Left cardiac atrium (tissue), 4 donors: ENCODE measurements at regions of chr7 and their contacts with region 1.

Region 1: DNA sequence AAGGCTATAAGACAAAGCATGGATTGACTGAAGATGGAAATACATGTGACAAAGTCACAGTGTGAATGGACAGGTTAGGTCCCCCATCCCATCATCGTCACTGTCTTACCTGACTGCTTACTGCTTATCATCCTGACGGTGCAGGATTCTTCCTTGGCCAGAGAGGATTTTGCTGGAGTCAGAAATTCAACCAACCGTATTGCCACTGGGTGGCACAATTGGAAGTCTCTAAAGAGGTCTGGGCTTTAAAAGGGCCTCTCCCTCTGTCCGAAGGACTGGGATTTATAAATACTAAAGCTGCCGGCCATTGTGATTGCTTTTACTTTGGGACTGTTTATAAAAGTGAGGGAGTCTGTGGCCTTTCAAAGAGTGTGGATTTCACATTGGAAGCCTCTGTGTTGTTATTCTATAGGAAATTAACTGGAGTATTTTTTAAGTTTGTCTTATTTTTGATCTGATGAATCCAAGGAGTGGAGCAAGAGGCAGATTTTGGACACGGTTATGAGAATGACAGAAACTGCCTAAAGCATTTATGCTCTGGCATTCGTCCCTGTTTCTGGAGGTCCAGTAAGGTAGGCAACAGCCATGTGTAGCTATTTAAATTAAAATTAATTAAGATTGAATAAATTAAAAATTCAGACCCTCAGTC is 113.3 kb upstream of the CREB5 start:
- DNase-seq: no peak
- ATAC-seq: peak; percentile 65 to 84

Region 2: DNA sequence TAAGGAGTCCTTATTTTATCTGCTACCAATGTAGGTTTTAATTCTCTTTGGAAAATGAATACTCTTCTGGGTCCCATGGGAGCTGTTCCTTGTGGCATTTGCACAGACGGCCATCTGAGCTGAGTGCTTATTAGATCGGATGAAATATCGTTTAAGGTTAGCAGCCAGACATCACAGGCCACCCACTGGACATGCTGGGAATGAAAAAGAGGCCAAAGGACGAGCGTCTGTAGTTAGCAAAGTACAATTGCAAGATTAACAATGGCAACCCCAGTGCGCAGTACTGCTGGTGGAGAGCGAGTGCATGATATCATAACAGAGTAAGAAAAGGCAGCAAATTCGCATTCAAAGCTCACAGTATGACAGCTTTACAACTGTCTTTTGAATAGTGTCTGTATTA is 85.0 kb after region 1 on chr7:
- intact Hi-C with region 1: loop called in 1 of 2 experiments (anchors 2 kb)
- DNase-seq: no peak
- ATAC-seq: no peak

Region 3: GRCh38 chr7:28853834-28854749 is 555.1 kb after region 1 on chr7:
- intact Hi-C with region 1: loop called in 1 of 2 experiments (anchors 2 kb)
- DNase-seq: peak; percentile 81
- ATAC-seq: peak; percentile 97 to 98